Activated B cell treated with CpG ODN at 0.5 μM for 24 hours (primary cell): ENCODE measurements at regions of chr2 and their contacts with region 1.

Region 1: GRCh38 chr2:172931918-172932520 is 143.6 kb upstream of the MAP3K20 start:
- DNase-seq: no peak
- ATAC-seq: no peak
- H3K4me3 Mint-ChIP-seq: no peak overlapping the region
- H3K27ac Mint-ChIP-seq: no peak overlapping the region
- H3K4me1 Mint-ChIP-seq: no peaks in the 10 kb centered on the region
- H3K27me3 Mint-ChIP-seq: peaks cover 18% of the 10 kb centered on the region
- CTCF ChIP-seq: no peak

Region 2: GRCh38 chr2:172329774-172330671 is 602.0 kb before region 1 on chr2:
- CTCF ChIA-PET with region 1: no interaction called
- POLR2A ChIA-PET with region 1: no interaction called
- intact Hi-C with region 1: no loop called
- DNase-seq: no peak
- ATAC-seq: no peak
- H3K4me3 Mint-ChIP-seq: no peak overlapping the region
- H3K27ac Mint-ChIP-seq: no peak overlapping the region
- H3K4me1 Mint-ChIP-seq: peaks cover 2% of the 10 kb centered on the region
- H3K27me3 Mint-ChIP-seq: peaks cover 5% of the 10 kb centered on the region
- CTCF ChIP-seq: no peak

Region 3: GRCh38 chr2:172753610-172754009 is 178.4 kb before region 1 on chr2:
- CTCF ChIA-PET with region 1: no interaction called
- POLR2A ChIA-PET with region 1: no interaction called
- intact Hi-C with region 1: no loop called
- DNase-seq: no peak
- ATAC-seq: no peak
- H3K4me3 Mint-ChIP-seq: no peak overlapping the region
- H3K27ac Mint-ChIP-seq: no peak overlapping the region
- H3K4me1 Mint-ChIP-seq: no peaks in the 10 kb centered on the region
- H3K27me3 Mint-ChIP-seq: peaks cover 10% of the 10 kb centered on the region
- CTCF ChIP-seq: no peak

Region 4: GRCh38 chr2:172806493-172806892 is 125.5 kb before region 1 on chr2:
- CTCF ChIA-PET with region 1: interaction called, 26 read pairs
- POLR2A ChIA-PET with region 1: no interaction called
- intact Hi-C with region 1: loop called (anchors 1 kb)
- DNase-seq: no peak
- ATAC-seq: no peak
- H3K4me3 Mint-ChIP-seq: no peak overlapping the region
- H3K27ac Mint-ChIP-seq: no peak overlapping the region
- H3K4me1 Mint-ChIP-seq: no peaks in the 10 kb centered on the region
- H3K27me3 Mint-ChIP-seq: peaks cover 12% of the 10 kb centered on the region
- CTCF ChIP-seq: no peak

Region 5: GRCh38 chr2:172864182-172864581 is 67.8 kb before region 1 on chr2:
- CTCF ChIA-PET with region 1: no interaction called
- POLR2A ChIA-PET with region 1: no interaction called
- intact Hi-C with region 1: loop called (anchors 2 kb)
- DNase-seq: no peak
- ATAC-seq: no peak
- H3K4me3 Mint-ChIP-seq: no peak overlapping the region
- H3K27ac Mint-ChIP-seq: no peak overlapping the region
- H3K4me1 Mint-ChIP-seq: no peaks in the 10 kb centered on the region
- H3K27me3 Mint-ChIP-seq: peaks cover 5% of the 10 kb centered on the region
- CTCF ChIP-seq: no peak

Region 6: GRCh38 chr2:173410579-173410978 is 478.6 kb after region 1 on chr2:
- CTCF ChIA-PET with region 1: no interaction called
- POLR2A ChIA-PET with region 1: no interaction called
- intact Hi-C with region 1: no loop called
- DNase-seq: no peak
- ATAC-seq: no peak
- H3K4me3 Mint-ChIP-seq: no peak overlapping the region
- H3K27ac Mint-ChIP-seq: no peak overlapping the region
- H3K4me1 Mint-ChIP-seq: no peaks in the 10 kb centered on the region
- H3K27me3 Mint-ChIP-seq: peaks cover 25% of the 10 kb centered on the region
- CTCF ChIP-seq: no peak